AG04449 (cell line): ENCODE measurements at regions of chr7 and their contacts with region 1.

Region 1: GRCh38 chr7:30459591-30460257 is 18.9 kb downstream of the NOD1 start:
- DNase-seq: peak; percentile 92
- H3K4me3 ChIP-seq: peak overlapping the region; percentile 12; the same call in 1 of the 2 replicates
- CTCF ChIP-seq: no peak

Region 2: DNA sequence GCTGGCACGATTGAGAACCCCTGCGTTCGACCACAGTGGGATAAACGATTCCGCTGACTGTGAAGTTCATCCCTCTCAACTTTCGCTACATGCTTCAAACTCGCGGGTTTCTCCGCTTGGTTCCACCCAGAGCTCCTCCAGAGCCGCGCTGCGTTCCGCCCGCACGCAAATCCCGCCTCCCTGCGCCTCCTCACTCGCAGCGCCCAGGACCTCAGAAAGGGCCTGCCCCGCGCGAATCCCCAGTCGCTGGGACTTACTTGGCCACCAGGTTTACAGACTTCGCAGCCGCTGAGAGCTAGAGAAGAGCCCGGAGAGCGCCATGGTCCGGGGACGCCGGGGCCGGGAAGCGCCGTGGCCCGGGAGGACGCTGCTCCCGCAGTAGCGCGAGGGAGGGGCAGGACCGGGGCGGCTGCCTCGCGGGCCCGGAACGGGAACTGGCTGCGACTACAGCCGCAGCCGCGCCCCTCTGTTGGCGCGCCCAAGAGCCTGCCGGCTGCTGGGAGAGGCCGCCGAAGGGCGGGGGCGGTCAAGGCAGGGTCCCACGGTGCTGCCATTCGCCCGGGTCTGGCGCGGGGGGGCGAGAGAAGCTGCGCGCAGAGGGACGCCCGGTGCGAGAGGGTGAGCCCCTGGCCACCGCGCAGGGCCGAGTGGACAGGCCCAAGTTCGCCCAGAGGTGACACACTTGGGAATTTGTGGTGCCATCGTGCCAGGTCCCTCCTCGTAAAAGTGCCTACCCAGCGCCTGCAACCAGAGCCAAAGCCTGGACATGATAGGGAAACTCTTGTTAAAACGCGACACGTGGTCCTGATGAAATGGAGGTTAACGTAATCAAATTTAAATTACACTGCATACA is 18.9 kb after region 1 on chr7 and contains the start of gene NOD1:
- CTCF ChIA-PET with region 1: interaction called, 15 read pairs
- POLR2A ChIA-PET with region 1: interaction called, 3 read pairs
- DNase-seq: no peak
- H3K4me3 ChIP-seq: peak within 1 kb of the TSS; percentile 74
- CTCF ChIP-seq: no peak

Region 3: DNA sequence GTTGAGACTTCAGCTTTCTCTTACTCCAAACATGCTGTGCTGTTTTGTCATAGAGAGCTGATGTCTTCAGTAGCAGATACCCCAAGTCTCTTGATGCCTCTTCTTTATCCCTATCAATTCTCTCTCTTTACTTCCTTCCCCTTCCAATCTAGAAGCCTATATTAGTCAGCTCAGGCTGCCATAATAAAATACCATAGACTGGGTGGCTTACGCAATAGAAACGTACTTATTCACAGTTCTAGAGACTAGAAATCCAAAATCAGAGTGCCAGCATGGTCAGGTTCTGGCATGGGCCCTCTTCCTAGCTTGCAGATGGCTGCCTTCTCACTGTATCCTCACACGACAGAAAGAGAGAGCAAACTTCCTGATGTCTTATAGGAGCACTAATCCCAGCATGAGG is 126.0 kb after region 1 on chr7:
- CTCF ChIA-PET with region 1: no interaction called
- POLR2A ChIA-PET with region 1: no interaction called
- DNase-seq: no peak
- H3K4me3 ChIP-seq: no peak overlapping the region
- CTCF ChIP-seq: no peak

Region 4: DNA sequence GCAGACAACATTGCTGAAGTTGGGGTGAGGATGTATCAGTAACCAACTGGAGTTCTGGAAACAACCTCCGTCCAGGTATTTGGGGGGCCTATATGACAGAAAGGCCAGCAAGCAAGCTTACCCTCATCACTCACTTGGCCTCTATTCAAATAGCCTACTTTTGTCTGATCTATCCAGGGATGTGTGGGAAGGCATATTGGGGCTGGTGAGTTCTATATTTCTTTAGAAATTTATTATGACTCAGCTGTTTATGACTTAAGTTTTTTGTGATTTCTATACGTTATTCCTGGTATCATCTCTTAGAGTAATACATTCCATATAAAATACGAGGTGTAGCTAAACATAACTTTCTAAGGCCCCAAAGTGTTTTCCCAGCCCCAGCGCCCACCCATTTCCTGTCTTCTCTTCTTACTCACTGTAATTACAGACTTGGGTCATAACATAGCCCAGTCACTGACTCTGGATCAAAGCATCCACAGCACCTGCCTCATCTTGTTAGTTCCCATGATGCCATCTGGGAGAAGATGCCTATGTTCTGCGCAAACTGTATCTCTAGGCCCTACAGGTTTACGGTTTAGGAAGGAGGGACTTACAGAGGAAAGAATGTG is 153.0 kb after region 1 on chr7:
- CTCF ChIA-PET with region 1: no interaction called
- POLR2A ChIA-PET with region 1: no interaction called
- DNase-seq: peak; percentile 19
- H3K4me3 ChIP-seq: no peak overlapping the region
- CTCF ChIP-seq: no peak

Region 5: DNA sequence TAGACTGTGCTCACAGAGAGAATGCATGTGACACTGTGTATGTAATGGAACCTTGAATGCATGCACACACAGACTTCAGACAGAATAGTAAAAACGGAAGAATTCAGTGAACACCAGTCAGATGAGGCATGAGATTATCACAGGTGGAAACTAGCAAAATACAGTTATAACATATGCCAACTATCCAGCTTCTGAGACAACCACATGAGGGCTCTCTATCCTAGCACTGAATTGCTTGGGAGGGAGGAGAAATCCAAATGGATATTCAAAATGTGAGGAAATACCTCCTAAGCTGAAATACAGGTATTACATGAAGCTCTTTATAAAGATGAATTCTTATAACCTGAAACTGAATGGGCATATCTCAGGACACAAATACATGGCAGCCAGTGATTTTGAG is 165.6 kb after region 1 on chr7:
- CTCF ChIA-PET with region 1: no interaction called
- POLR2A ChIA-PET with region 1: no interaction called
- DNase-seq: no peak
- H3K4me3 ChIP-seq: no peak overlapping the region
- CTCF ChIP-seq: no peak